Dendritic cell treated with granulocyte-macrophage colony-stimulating factor and Interleukin-4, amounts not matched to agents 40 ng/mL and 50 ng/mL, for 4 days (primary cell): ENCODE measurements at regions of chr1 and their contacts with region 1.

Region 1: DNA sequence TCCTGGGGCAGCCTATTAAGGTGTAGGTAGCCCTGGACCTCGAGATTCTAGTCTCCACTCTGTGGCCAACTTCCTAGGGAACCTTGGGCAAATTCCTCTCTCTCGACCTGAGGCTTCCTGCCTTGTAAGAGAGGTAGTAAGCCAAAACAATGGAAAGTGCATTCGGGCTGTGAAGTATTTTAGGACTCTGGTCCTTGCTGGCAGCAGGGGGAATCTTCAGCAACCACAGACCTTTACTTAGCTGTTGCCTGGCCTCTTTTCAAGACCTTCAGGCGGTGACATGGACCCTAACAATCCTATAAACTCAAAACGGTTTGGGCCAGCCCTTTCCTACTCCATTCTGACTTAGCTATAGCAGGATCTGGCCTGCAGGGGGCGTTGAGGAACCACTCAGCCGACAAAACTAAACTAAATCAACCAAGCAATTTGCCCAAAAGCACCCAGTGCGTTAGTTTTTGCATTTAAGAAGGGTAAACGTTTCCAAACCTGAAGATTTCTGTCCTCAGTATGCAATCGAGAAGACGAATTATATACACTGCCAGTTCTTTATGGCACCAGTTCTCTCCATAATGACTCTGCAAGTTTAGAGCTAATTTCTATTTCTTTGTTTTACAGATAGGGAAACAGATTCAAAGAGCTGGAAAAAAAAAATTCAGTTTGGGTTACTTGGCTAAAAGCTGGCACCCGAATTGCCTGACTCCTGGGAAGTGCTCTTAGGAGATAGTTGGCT is 10.9 kb upstream of the SESN2 start:
- H3K4me3 Mint-ChIP-seq: peak overlapping the region; percentile 99
- H3K27ac Mint-ChIP-seq: peak overlapping the region; percentile 97
- H3K4me1 Mint-ChIP-seq: peaks cover 63% of the 10 kb centered on the region
- H3K27me3 Mint-ChIP-seq: no peaks in the 10 kb centered on the region

Region 2: DNA sequence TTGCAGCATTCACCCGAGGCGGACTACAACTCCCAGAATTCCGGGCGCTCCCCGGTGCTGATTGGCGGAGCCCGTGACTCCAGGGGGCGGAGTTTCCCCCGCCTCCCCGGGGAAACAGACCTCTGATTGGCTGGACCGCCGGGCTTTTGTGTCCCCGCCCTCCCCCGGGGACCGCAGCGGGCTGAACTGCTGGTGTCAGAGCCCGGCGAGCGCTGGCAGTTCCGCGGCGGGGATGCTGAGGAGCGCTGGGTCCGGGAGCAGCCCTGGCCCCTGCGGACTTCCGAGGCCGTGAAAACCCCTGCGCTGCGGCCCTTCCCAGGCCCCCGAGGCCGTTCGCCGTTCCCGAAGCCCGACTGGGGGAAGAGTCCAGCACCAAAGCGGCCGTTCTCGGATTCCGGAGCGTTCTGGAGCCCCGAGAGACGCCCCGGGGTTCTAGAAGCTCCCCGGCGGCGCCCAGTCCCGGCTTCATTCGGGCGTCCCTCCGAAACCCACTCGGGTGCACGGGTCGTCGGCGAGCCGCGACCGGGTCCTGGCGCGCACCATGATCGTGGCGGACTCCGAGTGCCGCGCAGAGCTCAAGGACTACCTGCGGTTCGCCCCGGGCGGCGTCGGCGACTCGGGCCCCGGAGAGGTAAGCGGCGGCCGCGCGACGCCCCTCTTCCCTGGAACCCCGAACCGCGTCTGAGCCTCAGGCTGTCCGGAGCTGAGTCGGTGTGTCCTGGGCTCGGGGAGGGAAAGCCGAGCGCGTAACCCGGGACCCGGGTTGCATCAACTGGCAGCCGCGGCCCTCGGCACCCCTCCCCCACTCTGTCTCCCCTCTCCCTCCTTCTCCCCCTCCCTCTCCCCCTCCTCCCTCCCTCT is 11.1 kb after region 1 on chr1 and contains the start of gene SESN2:
- intact Hi-C with region 1: loop called (anchors 1 kb)
- H3K4me3 Mint-ChIP-seq: peak within 1 kb of the TSS; percentile 86
- H3K27ac Mint-ChIP-seq: peak within 1 kb of the TSS; percentile 84
- H3K4me1 Mint-ChIP-seq: peaks cover 28% of the 10 kb centered on the region
- H3K27me3 Mint-ChIP-seq: peaks cover 3% of the 10 kb centered on the region

Region 3: GRCh38 chr1:28329395-28330153 is 81.1 kb after region 1 on chr1:
- intact Hi-C with region 1: loop called (anchors 1 kb)
- H3K4me3 Mint-ChIP-seq: peak overlapping the region; percentile 87
- H3K27ac Mint-ChIP-seq: peak overlapping the region; percentile 96
- H3K4me1 Mint-ChIP-seq: peaks cover 58% of the 10 kb centered on the region
- H3K27me3 Mint-ChIP-seq: no peaks in the 10 kb centered on the region

Region 4: GRCh38 chr1:28369371-28370238 is 121.2 kb after region 1 on chr1 and contains the start of gene PHACTR4:
- intact Hi-C with region 1: loop called (anchors 2 kb)
- H3K4me3 Mint-ChIP-seq: peak within 1 kb of the TSS; percentile 97
- H3K27ac Mint-ChIP-seq: peak within 1 kb of the TSS; percentile 99
- H3K4me1 Mint-ChIP-seq: peaks cover 16% of the 10 kb centered on the region
- H3K27me3 Mint-ChIP-seq: no peaks in the 10 kb centered on the region